CD4-positive, alpha-beta memory T cell (primary cell): ENCODE measurements at regions of chr6 and their contacts with region 1.

Region 1: GRCh38 chr6:106512048-106512967 is 117.0 kb downstream of the RTN4IP1 start:
- DNase-seq: peak; percentile 77 to 84 (median 80)
- H3K4me3 ChIP-seq: peak overlapping the region; percentile 70 to 85
- H3K4me3 Mint-ChIP-seq: peak overlapping the region; percentile 93 to 96 (median 95)
- H3K27ac ChIP-seq: peak overlapping the region; percentile 98
- H3K27ac Mint-ChIP-seq: peak overlapping the region; percentile 92 to 98 (median 98)
- H3K4me1 ChIP-seq: peaks cover 51% of the 10 kb centered on the region
- H3K4me1 Mint-ChIP-seq: peaks cover 28 to 69% (median 47%) of the 10 kb centered on the region in 4 donors
- H3K27me3 ChIP-seq: no peaks in the 10 kb centered on the region
- H3K27me3 Mint-ChIP-seq: no peaks in the 10 kb centered on the region

Region 2: GRCh38 chr6:105733565-105734162 is 778.6 kb before region 1 on chr6:
- CTCF ChIA-PET with region 1: no interaction called
- POLR2A ChIA-PET with region 1: no interaction called
- intact Hi-C with region 1: no loop called
- DNase-seq: peak in 4 of 5 donors; percentile 39 to 48 (median 42)
- H3K4me3 ChIP-seq: no peak overlapping the region
- H3K4me3 Mint-ChIP-seq: no peak overlapping the region
- H3K27ac ChIP-seq: no peak overlapping the region
- H3K27ac Mint-ChIP-seq: peak overlapping the region in 1 of 7 donors; percentile 21
- H3K4me1 ChIP-seq: no peaks in the 10 kb centered on the region
- H3K4me1 Mint-ChIP-seq: peaks cover 5 to 12% (median 8%) of the 10 kb centered on the region in 4 donors
- H3K27me3 ChIP-seq: no peaks in the 10 kb centered on the region
- H3K27me3 Mint-ChIP-seq: no peaks in the 10 kb centered on the region

Region 3: GRCh38 chr6:106397431-106397830 is 114.9 kb before region 1 on chr6:
- CTCF ChIA-PET with region 1: no interaction called
- POLR2A ChIA-PET with region 1: no interaction called
- intact Hi-C with region 1: no loop called
- DNase-seq: no peak
- H3K4me3 ChIP-seq: no peak overlapping the region
- H3K4me3 Mint-ChIP-seq: no peak overlapping the region
- H3K27ac ChIP-seq: no peak overlapping the region
- H3K27ac Mint-ChIP-seq: no peak overlapping the region
- H3K4me1 ChIP-seq: no peaks in the 10 kb centered on the region
- H3K4me1 Mint-ChIP-seq: no peaks in the 10 kb centered on the region
- H3K27me3 ChIP-seq: peaks cover 4% of the 10 kb centered on the region
- H3K27me3 Mint-ChIP-seq: peaks cover 4 to 17% of the 10 kb centered on the region in 2 donors

Region 4: DNA sequence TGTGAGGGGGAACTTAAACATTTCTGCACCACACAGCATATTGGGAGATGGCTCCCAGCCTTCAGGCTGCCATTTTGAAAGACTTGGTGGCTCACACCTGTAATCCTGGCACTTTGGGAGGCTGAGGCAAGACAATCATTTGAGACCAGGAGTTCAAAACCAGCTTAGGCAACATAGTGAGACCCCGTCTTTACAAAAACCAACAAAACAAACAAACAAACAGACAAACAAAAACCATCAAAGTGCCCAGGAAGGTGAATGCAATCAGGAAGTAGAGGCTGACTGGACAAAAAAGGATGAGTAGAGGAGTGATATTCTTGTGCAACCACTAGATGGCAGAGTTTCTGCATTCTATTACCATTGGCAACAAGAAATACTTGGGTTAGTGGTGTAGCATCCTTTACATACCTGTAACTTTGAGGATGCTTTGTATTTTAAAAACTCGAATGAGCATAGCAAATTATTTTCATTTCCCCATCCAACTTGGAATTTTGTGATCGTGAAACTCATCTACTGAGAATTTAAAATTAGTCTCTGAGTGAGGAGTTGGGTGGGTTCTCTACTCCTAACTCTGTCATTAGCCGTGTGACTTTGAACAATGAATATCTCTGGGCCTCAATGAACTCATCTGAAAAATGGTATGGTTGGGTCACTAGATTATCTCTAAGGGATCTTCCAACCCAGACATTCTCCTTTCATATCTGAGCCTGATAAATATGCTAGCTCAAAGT is 67.4 kb before region 1 on chr6:
- CTCF ChIA-PET with region 1: interaction called, 16 read pairs
- POLR2A ChIA-PET with region 1: interaction called, 4 read pairs
- intact Hi-C with region 1: loop called (anchors 2 kb)
- DNase-seq: peak in 4 of 5 donors; percentile 68 to 77 (median 72)
- H3K4me3 ChIP-seq: no peak overlapping the region
- H3K4me3 Mint-ChIP-seq: no peak overlapping the region
- H3K27ac ChIP-seq: no peak overlapping the region
- H3K27ac Mint-ChIP-seq: no peak overlapping the region
- H3K4me1 ChIP-seq: peaks cover 5% of the 10 kb centered on the region
- H3K4me1 Mint-ChIP-seq: peaks cover 4 to 13% (median 11%) of the 10 kb centered on the region in 4 donors
- H3K27me3 ChIP-seq: no peaks in the 10 kb centered on the region
- H3K27me3 Mint-ChIP-seq: peaks cover 11 to 19% of the 10 kb centered on the region in 2 donors

Region 5: DNA sequence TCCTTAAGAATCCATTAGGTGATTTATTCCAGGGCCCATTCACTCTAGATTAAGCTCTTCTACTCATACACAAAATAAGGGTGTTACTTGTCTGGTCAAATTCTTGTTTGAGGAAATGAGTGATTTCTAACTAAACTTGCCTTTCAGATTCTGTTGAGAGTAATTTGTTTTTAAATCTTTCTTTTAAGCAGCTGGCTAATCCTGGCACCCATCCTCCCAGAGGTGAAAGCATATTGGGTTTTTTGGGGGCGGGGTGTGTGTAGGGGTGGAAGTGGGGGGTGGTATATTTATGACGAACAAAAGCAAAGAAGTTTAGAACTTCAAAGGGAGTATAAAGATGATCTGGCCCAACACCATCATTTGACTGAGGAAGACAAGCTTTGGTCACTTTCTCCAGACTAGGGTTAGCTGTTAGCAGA is 22.3 kb after region 1 on chr6:
- CTCF ChIA-PET with region 1: interaction called, 69 read pairs
- POLR2A ChIA-PET with region 1: interaction called, 97 read pairs
- intact Hi-C with region 1: loop called (anchors 1 kb)
- DNase-seq: peak in 1 of 5 donors; percentile 35
- H3K4me3 ChIP-seq: no peak overlapping the region
- H3K4me3 Mint-ChIP-seq: peak overlapping the region in 5 of 8 donors; percentile 4 to 70 (median 46)
- H3K27ac ChIP-seq: no peak overlapping the region
- H3K27ac Mint-ChIP-seq: peak overlapping the region; percentile 9 to 86 (median 67)
- H3K4me1 ChIP-seq: peaks cover 79% of the 10 kb centered on the region
- H3K4me1 Mint-ChIP-seq: peaks cover 73 to 87% (median 80%) of the 10 kb centered on the region in 4 donors
- H3K27me3 ChIP-seq: no peaks in the 10 kb centered on the region
- H3K27me3 Mint-ChIP-seq: no peaks in the 10 kb centered on the region

Region 6: GRCh38 chr6:106546691-106547414 is 34.5 kb after region 1 on chr6:
- CTCF ChIA-PET with region 1: interaction called, 163 read pairs
- POLR2A ChIA-PET with region 1: interaction called, 9 read pairs
- intact Hi-C with region 1: no loop called
- DNase-seq: no peak
- H3K4me3 ChIP-seq: no peak overlapping the region
- H3K4me3 Mint-ChIP-seq: peak overlapping the region in 1 of 8 donors; percentile 20
- H3K27ac ChIP-seq: no peak overlapping the region
- H3K27ac Mint-ChIP-seq: peak overlapping the region; percentile 39 to 87 (median 77)
- H3K4me1 ChIP-seq: peaks cover 18% of the 10 kb centered on the region
- H3K4me1 Mint-ChIP-seq: peaks cover 26 to 41% (median 34%) of the 10 kb centered on the region in 4 donors
- H3K27me3 ChIP-seq: no peaks in the 10 kb centered on the region
- H3K27me3 Mint-ChIP-seq: no peaks in the 10 kb centered on the region

Region 7: GRCh38 chr6:106561686-106562405 is 49.5 kb after region 1 on chr6:
- CTCF ChIA-PET with region 1: interaction called, 163 read pairs
- POLR2A ChIA-PET with region 1: interaction called, 19 read pairs
- intact Hi-C with region 1: no loop called
- DNase-seq: no peak
- H3K4me3 ChIP-seq: no peak overlapping the region
- H3K4me3 Mint-ChIP-seq: no peak overlapping the region
- H3K27ac ChIP-seq: no peak overlapping the region
- H3K27ac Mint-ChIP-seq: peak overlapping the region; percentile 12 to 85 (median 52)
- H3K4me1 ChIP-seq: no peaks in the 10 kb centered on the region
- H3K4me1 Mint-ChIP-seq: peaks cover 0 to 6% (median 3%) of the 10 kb centered on the region in 4 donors
- H3K27me3 ChIP-seq: no peaks in the 10 kb centered on the region
- H3K27me3 Mint-ChIP-seq: no peaks in the 10 kb centered on the region

Region 8: GRCh38 chr6:106591111-106591825 is 79.0 kb after region 1 on chr6:
- CTCF ChIA-PET with region 1: no interaction called
- POLR2A ChIA-PET with region 1: no interaction called
- intact Hi-C with region 1: no loop called
- DNase-seq: no peak
- H3K4me3 ChIP-seq: no peak overlapping the region
- H3K4me3 Mint-ChIP-seq: no peak overlapping the region
- H3K27ac ChIP-seq: no peak overlapping the region
- H3K27ac Mint-ChIP-seq: no peak overlapping the region
- H3K4me1 ChIP-seq: no peaks in the 10 kb centered on the region
- H3K4me1 Mint-ChIP-seq: no peaks in the 10 kb centered on the region
- H3K27me3 ChIP-seq: no peaks in the 10 kb centered on the region
- H3K27me3 Mint-ChIP-seq: no peaks in the 10 kb centered on the region

Region 9: DNA sequence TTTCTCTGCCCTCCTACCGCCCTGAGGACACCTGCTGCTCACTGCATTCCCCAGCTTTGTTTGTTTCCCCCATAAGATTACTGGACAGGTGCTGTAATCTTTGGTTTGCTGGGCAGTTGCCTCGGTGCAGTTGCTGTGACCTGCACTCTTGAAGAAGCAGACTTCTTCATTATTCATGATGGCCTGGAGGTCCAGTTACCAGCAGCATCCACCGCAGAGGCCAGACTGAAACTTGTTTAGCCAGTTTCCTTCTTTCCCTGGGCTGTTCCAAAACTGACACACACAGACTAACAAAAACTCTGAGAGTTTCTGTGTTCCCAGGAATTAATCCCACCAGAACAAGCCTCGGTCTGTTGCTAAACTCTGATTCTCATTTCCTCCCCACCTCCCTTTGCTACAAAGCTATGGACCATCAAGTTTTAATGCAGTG is 261.2 kb after region 1 on chr6:
- CTCF ChIA-PET with region 1: no interaction called
- POLR2A ChIA-PET with region 1: no interaction called
- intact Hi-C with region 1: no loop called
- DNase-seq: no peak
- H3K4me3 ChIP-seq: no peak overlapping the region
- H3K4me3 Mint-ChIP-seq: no peak overlapping the region
- H3K27ac ChIP-seq: no peak overlapping the region
- H3K27ac Mint-ChIP-seq: no peak overlapping the region
- H3K4me1 ChIP-seq: no peaks in the 10 kb centered on the region
- H3K4me1 Mint-ChIP-seq: no peaks in the 10 kb centered on the region
- H3K27me3 ChIP-seq: no peaks in the 10 kb centered on the region
- H3K27me3 Mint-ChIP-seq: peaks cover 10 to 12% of the 10 kb centered on the region in 2 donors